ENCODE measurements at regions of chr9 and their contacts with region 1.

Region 1: GRCh38 chr9:102669220-102669619 is 325.9 kb upstream of the CYLC2 start:
- DNase-seq: no peak
- H3K4me3 ChIP-seq: no peak overlapping the region
- H3K27ac ChIP-seq: no peak overlapping the region
- H3K4me1 ChIP-seq: no peaks in the 10 kb centered on the region
- H3K27me3 ChIP-seq: no peaks in the 10 kb centered on the region
- CTCF ChIP-seq: no peak
- EP300 ChIP-seq: no peak
- POLR2A ChIP-seq: no peak

Region 2: GRCh38 chr9:101176384-101176783 is 1492.8 kb before region 1 on chr9:
- in situ Hi-C with region 1: no loop called
- intact Hi-C with region 1: loop called (anchors 10 kb)
- DNase-seq: no peak
- H3K4me3 ChIP-seq: no peak overlapping the region
- H3K27ac ChIP-seq: no peak overlapping the region
- H3K4me1 ChIP-seq: no peaks in the 10 kb centered on the region
- H3K27me3 ChIP-seq: no peaks in the 10 kb centered on the region
- CTCF ChIP-seq: no peak
- EP300 ChIP-seq: no peak
- POLR2A ChIP-seq: no peak